ENCODE measurements at regions of chr16 and their contacts with region 1.

Region 1: GRCh38 chr16:50024684-50025536 is at the start of gene CNEP1R1:
- DNase-seq: peak; percentile 92
- H3K4me3 Mint-ChIP-seq: peak within 1 kb of the TSS; percentile 96
- H3K27ac Mint-ChIP-seq: peak within 1 kb of the TSS; percentile 84
- H3K4me1 Mint-ChIP-seq: peaks cover 26% of the 10 kb centered on the region
- H3K27me3 Mint-ChIP-seq: peaks cover 11% of the 10 kb centered on the region
- total RNA-seq, gene CNEP1R1: 21.9 and 22.7 TPM in 2 replicates

Region 2: GRCh38 chr16:49866595-49867071 is 158.3 kb before region 1 on chr16:
- intact Hi-C with region 1: no loop called
- DNase-seq: no peak
- H3K4me3 Mint-ChIP-seq: no peak overlapping the region
- H3K27ac Mint-ChIP-seq: no peak overlapping the region
- H3K4me1 Mint-ChIP-seq: no peaks in the 10 kb centered on the region
- H3K27me3 Mint-ChIP-seq: peaks cover 4% of the 10 kb centered on the region

Region 3: GRCh38 chr16:50011707-50012106 is 13.2 kb before region 1 on chr16:
- intact Hi-C with region 1: no loop called
- DNase-seq: no peak
- H3K4me3 Mint-ChIP-seq: no peak overlapping the region
- H3K27ac Mint-ChIP-seq: no peak overlapping the region
- H3K4me1 Mint-ChIP-seq: peaks cover 8% of the 10 kb centered on the region
- H3K27me3 Mint-ChIP-seq: peaks cover 5% of the 10 kb centered on the region

Region 4: DNA sequence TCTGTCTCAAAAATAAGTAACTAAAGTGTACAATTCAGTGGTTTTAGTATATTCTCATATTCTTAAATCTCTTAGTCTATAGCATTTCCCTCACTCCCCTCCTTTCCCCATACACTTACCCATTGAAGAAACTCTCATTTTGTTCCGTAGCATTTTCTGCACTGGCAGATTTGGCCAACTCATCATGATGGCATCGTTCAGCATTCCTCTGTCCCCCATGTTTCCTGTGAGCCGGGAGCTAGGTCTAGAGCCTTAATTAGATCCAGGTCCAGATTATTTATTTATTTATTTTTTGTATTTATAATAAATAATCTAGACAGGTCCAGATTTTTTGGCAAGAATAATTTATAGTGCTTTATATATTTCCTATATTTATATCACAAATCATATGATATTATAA is 71.9 kb after region 1 on chr16:
- intact Hi-C with region 1: loop called (anchors 2 kb)
- DNase-seq: no peak
- H3K4me3 Mint-ChIP-seq: no peak overlapping the region
- H3K27ac Mint-ChIP-seq: no peak overlapping the region
- H3K4me1 Mint-ChIP-seq: peaks cover 24% of the 10 kb centered on the region
- H3K27me3 Mint-ChIP-seq: no peaks in the 10 kb centered on the region

Region 5: DNA sequence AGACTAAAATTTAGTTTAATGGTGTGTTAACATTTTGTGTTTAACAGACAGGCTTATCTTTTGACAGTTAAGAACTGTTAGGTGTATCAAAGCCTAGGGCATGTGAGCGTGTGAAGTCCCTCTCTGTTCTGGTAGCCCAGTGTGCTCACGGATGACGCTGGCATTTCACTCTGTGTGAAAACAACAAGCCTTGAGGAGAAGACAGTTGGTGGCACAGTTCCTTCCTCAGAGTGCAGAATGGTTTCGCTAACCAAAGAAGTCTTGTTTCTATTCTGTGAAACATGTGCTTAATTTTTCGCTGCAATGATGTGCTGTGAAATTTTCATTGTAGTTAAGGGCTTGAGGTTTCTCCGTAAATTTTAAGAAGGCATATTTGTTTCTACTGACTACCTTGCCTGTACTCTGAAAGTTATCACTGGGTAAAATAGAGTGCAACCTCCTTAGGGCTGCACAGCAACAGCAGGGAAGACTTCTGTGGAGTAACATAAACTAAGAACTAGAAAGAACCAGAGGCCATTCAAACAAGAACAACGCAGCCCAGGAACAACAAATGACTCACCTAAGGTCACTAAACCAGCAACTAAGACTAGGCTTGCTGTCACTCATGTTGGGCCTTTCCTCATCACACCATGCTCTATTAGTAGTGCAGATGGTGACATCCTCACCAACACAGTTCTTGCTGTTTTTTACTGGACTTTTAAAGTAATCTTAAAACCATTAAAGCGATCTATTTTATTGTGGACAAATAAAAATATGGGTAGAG is 310.5 kb after region 1 on chr16:
- intact Hi-C with region 1: loop called (anchors 10 kb)
- DNase-seq: no peak
- H3K4me3 Mint-ChIP-seq: peak overlapping the region; percentile 37
- H3K27ac Mint-ChIP-seq: peak overlapping the region; percentile 87
- H3K4me1 Mint-ChIP-seq: peaks cover 48% of the 10 kb centered on the region
- H3K27me3 Mint-ChIP-seq: no peaks in the 10 kb centered on the region

Region 6: GRCh38 chr16:50548125-50548908 is 523.4 kb after region 1 on chr16 and contains the start of gene NKD1:
- intact Hi-C with region 1: loop called (anchors 1 kb)
- DNase-seq: peak; percentile 65
- H3K4me3 Mint-ChIP-seq: peak within 1 kb of the TSS; percentile 91
- H3K27ac Mint-ChIP-seq: peak within 1 kb of the TSS; percentile 59
- H3K4me1 Mint-ChIP-seq: peaks cover 14% of the 10 kb centered on the region
- H3K27me3 Mint-ChIP-seq: peaks cover 37% of the 10 kb centered on the region
- total RNA-seq, gene NKD1: 1.1 and 1.4 TPM in 2 replicates

Region 7: DNA sequence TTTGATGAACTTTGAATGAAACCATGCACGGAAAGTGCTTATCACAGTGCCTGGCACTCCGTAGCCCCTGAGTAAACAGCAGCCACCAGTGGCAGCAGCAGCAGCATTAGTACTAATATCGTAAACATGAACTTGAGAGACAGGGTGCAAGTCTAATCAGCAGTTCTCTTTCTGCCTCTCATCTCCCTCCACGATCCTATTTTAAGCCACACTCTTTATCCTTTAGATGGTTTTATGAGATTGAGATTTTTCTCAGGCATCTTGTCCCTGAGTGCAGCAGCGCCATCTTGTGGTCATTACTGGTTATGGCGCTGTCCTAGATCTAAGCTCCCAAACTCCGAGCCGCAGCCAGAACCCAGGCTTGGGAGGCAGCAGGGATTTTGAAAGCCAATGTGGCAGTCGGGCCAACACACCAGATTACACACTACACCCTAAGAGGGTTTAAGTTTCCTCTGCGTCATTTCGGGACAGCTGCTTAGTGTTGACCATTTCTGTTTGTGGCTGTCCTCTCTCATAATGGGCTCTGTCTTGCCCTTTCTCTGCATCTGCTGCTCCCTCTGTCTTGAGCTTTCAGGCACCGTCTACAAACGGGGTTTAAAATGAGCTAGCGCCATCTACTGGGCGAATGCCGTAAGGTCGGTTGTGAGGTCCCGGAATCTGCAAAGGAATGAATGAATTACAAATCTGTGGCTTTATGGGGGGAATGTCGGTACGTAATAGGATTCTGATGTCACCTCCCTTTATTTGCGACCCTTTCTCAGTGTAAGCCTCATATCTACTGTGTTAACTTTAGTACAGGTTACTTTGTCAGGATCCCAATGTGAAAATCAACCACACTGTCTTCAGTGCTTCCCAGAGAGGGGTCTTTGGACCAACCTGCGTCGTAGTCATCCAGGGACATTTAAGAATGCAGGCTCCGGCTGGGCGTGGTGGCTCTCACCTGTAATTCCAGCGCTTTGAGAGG is 781.5 kb after region 1 on chr16:
- intact Hi-C with region 1: loop called (anchors 1 kb)
- DNase-seq: peak; percentile 78
- H3K4me3 Mint-ChIP-seq: peak overlapping the region; percentile 66
- H3K27ac Mint-ChIP-seq: peak overlapping the region; percentile 30
- H3K4me1 Mint-ChIP-seq: peaks cover 9% of the 10 kb centered on the region
- H3K27me3 Mint-ChIP-seq: no peaks in the 10 kb centered on the region